Naive thymus-derived CD4-positive, alpha-beta T cell (primary cell): ENCODE measurements at regions of chr11 and their contacts with region 1.

Region 1: DNA sequence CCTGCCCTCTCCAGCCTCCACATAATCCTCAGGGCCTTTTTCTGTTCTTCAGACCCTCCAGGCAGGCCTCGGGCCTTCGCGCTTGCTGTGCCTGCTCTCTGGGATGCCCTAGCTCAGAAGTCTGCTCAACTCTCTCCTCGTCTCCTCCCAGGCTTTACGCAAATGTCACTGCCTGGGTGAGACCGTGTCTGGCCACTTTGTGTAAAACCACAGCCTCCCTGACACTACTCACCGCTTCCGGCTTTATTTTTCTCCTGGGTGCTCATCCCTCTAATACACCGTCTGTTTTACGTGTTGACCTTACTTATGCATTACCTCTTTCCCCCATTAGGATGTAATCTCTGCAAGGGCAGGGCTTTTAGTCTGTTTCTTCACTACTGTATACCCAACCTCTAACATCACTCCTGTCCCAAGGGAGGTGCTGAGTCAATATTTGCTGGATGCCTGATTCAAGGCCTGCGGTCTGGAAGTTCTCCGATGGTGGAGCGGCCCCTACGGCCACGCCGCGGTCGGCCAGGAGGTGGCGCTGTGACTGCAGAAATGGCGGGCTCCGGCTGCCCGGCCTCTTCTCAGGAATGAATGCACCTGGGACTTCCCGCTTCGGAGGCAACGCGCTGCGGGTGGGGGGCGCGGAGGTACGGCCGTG is 58.2 kb upstream of the THY1 start:
- DNase-seq: peak in 8 of 9 donors; percentile 14 to 88 (median 52)
- ATAC-seq: peak; percentile 73
- H3K4me3 ChIP-seq: no peak overlapping the region
- H3K4me3 Mint-ChIP-seq: no peak overlapping the region
- H3K27ac ChIP-seq: no peak overlapping the region
- H3K27ac Mint-ChIP-seq: peak overlapping the region in 1 of 9 donors; percentile 58
- H3K4me1 ChIP-seq: no peaks in the 10 kb centered on the region
- H3K4me1 Mint-ChIP-seq: peaks cover 0 to 1% (median 0%) of the 10 kb centered on the region in 7 donors
- H3K27me3 ChIP-seq: no peaks in the 10 kb centered on the region
- H3K27me3 Mint-ChIP-seq: peaks cover 2 to 28% (median 25%) of the 10 kb centered on the region in 5 donors

Region 2: GRCh38 chr11:119533921-119534736 is 53.0 kb after region 1 on chr11:
- CTCF ChIA-PET with region 1: no interaction called
- POLR2A ChIA-PET with region 1: no interaction called
- intact Hi-C with region 1: loop called in 1 of 2 experiments (anchors 1 kb)
- DNase-seq: peak in 7 of 9 donors; percentile 13 to 68 (median 19)
- ATAC-seq: peak; percentile 84
- H3K4me3 ChIP-seq: no peak overlapping the region
- H3K4me3 Mint-ChIP-seq: no peak overlapping the region
- H3K27ac ChIP-seq: no peak overlapping the region
- H3K27ac Mint-ChIP-seq: no peak overlapping the region
- H3K4me1 ChIP-seq: no peaks in the 10 kb centered on the region
- H3K4me1 Mint-ChIP-seq: peaks cover 0 to 9% (median 0%) of the 10 kb centered on the region in 7 donors
- H3K27me3 ChIP-seq: no peaks in the 10 kb centered on the region
- H3K27me3 Mint-ChIP-seq: peaks cover 8 to 22% (median 16%) of the 10 kb centered on the region in 5 donors

Region 3: DNA sequence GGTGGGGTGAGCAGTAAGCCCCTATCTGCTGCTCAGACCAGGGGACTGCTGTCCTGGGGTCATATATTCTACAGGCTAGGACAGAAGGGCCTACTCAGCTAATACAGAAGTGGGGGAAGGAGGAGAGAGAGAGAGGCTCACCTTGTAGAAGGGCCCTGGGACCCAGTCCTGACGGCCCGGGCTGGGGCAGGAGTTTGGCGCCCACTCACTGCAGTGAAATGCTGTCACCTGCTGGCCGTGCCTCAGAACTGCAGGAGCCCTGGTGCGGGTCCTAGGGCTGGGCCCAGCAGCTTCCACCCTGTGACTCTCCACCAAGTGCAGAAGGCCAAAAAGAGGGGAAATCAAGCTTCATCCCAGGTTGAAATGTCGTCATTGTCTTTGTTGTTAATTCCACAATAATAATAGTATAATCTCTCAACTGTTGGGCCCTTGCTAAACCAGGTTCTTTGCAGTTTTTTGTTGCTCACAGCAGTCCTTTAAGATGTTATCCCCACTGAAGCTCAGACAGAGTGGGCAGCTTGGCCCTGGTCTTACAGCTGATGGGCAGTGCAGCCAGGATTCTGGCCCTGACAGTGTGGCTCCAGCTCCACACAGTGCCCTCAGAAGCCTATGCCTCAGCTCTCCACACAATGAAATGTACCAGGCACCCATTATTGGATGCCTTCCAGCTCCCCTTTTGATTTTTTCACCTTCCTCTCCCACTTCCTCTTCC is 627.2 kb after region 1 on chr11:
- CTCF ChIA-PET with region 1: interaction called, 3 read pairs
- POLR2A ChIA-PET with region 1: no interaction called
- intact Hi-C with region 1: loop called in 1 of 2 experiments (anchors 1 kb)
- DNase-seq: peak in 8 of 9 donors; percentile 5 to 65 (median 35)
- ATAC-seq: peak; percentile 75
- H3K4me3 ChIP-seq: no peak overlapping the region
- H3K4me3 Mint-ChIP-seq: no peak overlapping the region
- H3K27ac ChIP-seq: no peak overlapping the region
- H3K27ac Mint-ChIP-seq: no peak overlapping the region
- H3K4me1 ChIP-seq: no peaks in the 10 kb centered on the region
- H3K4me1 Mint-ChIP-seq: no peaks in the 10 kb centered on the region
- H3K27me3 ChIP-seq: no peaks in the 10 kb centered on the region
- H3K27me3 Mint-ChIP-seq: peaks cover 0 to 15% (median 7%) of the 10 kb centered on the region in 5 donors